CD4-positive, alpha-beta T cell (primary cell): ENCODE measurements at regions of chr5 and their contacts with region 1.

Region 1: DNA sequence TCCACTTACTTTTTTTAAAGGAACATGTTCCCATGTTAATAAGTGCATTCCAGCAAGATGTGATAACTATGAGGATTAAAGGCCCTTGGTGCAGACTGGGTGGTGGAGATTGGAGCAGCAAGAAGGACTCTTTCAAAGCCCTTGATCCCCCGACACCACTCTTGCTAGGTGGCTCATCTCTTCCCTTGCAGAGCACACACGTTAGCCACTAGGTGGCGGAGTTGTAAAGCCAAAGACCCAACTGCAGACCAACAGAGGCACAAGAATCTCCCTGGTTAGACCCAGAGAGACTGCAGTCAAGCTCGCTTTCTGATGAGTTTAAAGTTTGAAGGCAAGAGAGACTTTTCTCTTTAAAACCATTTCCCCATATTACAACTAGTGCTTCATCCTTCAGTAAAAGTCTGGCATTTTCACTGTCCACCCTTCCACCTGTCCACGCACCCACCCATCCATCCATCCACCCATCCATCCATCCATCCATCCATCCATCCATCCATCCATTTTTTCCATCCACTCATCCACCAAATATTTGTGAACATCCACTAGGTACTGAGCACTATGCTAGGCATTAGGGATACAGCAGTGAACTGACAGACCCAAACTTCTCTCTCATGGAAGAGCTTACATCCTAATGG is 226.9 kb downstream of the MSX2 start:
- DNase-seq: peak; percentile 9 to 75 (median 34)
- ATAC-seq: peak; percentile 59
- H3K4me3 ChIP-seq: no peak overlapping the region
- H3K4me3 Mint-ChIP-seq: no peak overlapping the region
- H3K27ac ChIP-seq: no peak overlapping the region
- H3K27ac Mint-ChIP-seq: no peak overlapping the region
- H3K4me1 ChIP-seq: no peaks in the 10 kb centered on the region
- H3K4me1 Mint-ChIP-seq: no peaks in the 10 kb centered on the region
- H3K27me3 ChIP-seq: peaks cover 0 to 3% of the 10 kb centered on the region in 2 experiments
- H3K27me3 Mint-ChIP-seq: peaks cover 24% of the 10 kb centered on the region
- CTCF ChIP-seq: peak; percentile 69

Region 2: GRCh38 chr5:174922955-174923354 is 28.3 kb before region 1 on chr5:
- CTCF ChIA-PET with region 1: no interaction called
- POLR2A ChIA-PET with region 1: no interaction called
- intact Hi-C with region 1: no loop called
- DNase-seq: no peak
- ATAC-seq: no peak
- H3K4me3 ChIP-seq: no peak overlapping the region
- H3K4me3 Mint-ChIP-seq: no peak overlapping the region
- H3K27ac ChIP-seq: no peak overlapping the region
- H3K27ac Mint-ChIP-seq: no peak overlapping the region
- H3K4me1 ChIP-seq: no peaks in the 10 kb centered on the region
- H3K4me1 Mint-ChIP-seq: no peaks in the 10 kb centered on the region
- H3K27me3 ChIP-seq: peaks cover 0 to 3% of the 10 kb centered on the region in 2 experiments
- H3K27me3 Mint-ChIP-seq: peaks cover 17% of the 10 kb centered on the region
- CTCF ChIP-seq: no peak

Region 3: GRCh38 chr5:175444060-175444904 is 493.0 kb after region 1 on chr5 and contains the start of gene DRD1:
- CTCF ChIA-PET with region 1: no interaction called
- POLR2A ChIA-PET with region 1: no interaction called
- intact Hi-C with region 1: loop called in 1 of 2 experiments (anchors 2 kb)
- DNase-seq: peak in 13 of 14 experiments; percentile 7 to 69 (median 41)
- ATAC-seq: peak; percentile 41
- H3K4me3 ChIP-seq: no peak within 1 kb of the TSS
- H3K4me3 Mint-ChIP-seq: peak within 1 kb of the TSS; percentile 63
- H3K27ac ChIP-seq: no peak within 1 kb of the TSS
- H3K27ac Mint-ChIP-seq: no peak within 1 kb of the TSS
- H3K4me1 ChIP-seq: peaks cover 13% of the 10 kb centered on the region
- H3K4me1 Mint-ChIP-seq: peaks cover 5% of the 10 kb centered on the region
- H3K27me3 ChIP-seq: peaks cover 40 to 55% of the 10 kb centered on the region in 2 experiments
- H3K27me3 Mint-ChIP-seq: peaks cover 75% of the 10 kb centered on the region
- CTCF ChIP-seq: peak; percentile 45
- total RNA-seq, gene DRD1: not detected

Region 4: GRCh38 chr5:175567954-175568353 is 616.7 kb after region 1 on chr5:
- CTCF ChIA-PET with region 1: no interaction called
- POLR2A ChIA-PET with region 1: no interaction called
- intact Hi-C with region 1: loop called in 1 of 2 experiments (anchors 5 kb)
- DNase-seq: peak in 2 of 14 experiments; percentile 3 to 8
- ATAC-seq: no peak
- H3K4me3 ChIP-seq: no peak overlapping the region
- H3K4me3 Mint-ChIP-seq: no peak overlapping the region
- H3K27ac ChIP-seq: no peak overlapping the region
- H3K27ac Mint-ChIP-seq: no peak overlapping the region
- H3K4me1 ChIP-seq: no peaks in the 10 kb centered on the region
- H3K4me1 Mint-ChIP-seq: no peaks in the 10 kb centered on the region
- H3K27me3 ChIP-seq: no peaks in the 10 kb centered on the region
- H3K27me3 Mint-ChIP-seq: peaks cover 3% of the 10 kb centered on the region
- CTCF ChIP-seq: no peak

Region 5: DNA sequence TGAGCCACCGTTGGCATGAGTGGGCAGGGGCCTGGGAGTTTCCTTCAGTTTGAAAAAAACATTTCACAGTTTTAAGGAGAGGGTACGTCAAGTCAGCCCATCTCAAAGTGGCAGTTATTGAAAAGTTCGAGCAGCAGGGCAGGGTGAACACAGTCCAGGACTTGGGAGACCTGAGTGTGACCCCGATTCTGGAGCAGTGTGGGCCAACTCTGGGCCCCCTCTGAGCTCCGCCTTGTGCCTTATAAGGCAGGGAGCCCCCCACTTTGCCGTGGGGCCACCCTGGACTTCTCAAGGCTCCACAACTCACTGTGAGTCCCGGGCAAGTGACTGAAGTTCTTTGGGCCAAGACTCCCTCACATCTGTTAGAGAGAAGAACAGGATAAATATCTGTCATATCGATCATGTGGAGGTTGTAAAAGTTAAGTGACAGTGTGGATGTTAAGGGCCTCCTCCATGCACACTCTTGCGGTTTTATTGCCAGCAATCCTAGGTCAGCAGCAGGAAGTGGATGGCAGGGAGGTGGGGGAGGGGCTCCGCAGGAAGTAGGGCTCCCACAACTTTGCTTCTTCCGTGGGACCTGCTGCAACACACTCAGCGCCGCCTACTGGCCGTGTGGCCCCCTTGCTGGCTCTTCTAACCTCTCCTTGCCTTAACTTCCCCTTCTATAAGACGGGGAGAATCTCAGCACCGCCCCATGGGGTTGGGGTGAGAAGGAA is 745.0 kb after region 1 on chr5:
- CTCF ChIA-PET with region 1: no interaction called
- POLR2A ChIA-PET with region 1: no interaction called
- intact Hi-C with region 1: loop called in 1 of 2 experiments (anchors 10 kb)
- DNase-seq: peak; percentile 50 to 87 (median 70)
- ATAC-seq: peak; percentile 80
- H3K4me3 ChIP-seq: no peak overlapping the region
- H3K4me3 Mint-ChIP-seq: peak overlapping the region; percentile 18
- H3K27ac ChIP-seq: peak overlapping the region in 1 of 2 donors; percentile 13
- H3K27ac Mint-ChIP-seq: peak overlapping the region; percentile 61
- H3K4me1 ChIP-seq: peaks cover 28% of the 10 kb centered on the region
- H3K4me1 Mint-ChIP-seq: peaks cover 53% of the 10 kb centered on the region
- H3K27me3 ChIP-seq: no peaks in the 10 kb centered on the region
- H3K27me3 Mint-ChIP-seq: no peaks in the 10 kb centered on the region
- CTCF ChIP-seq: peak; percentile 88

Region 6: GRCh38 chr5:175718401-175719108 is 767.3 kb after region 1 on chr5:
- CTCF ChIA-PET with region 1: no interaction called
- POLR2A ChIA-PET with region 1: no interaction called
- intact Hi-C with region 1: loop called in 1 of 2 experiments (anchors 2 kb)
- DNase-seq: peak; percentile 20 to 82 (median 52)
- ATAC-seq: no peak
- H3K4me3 ChIP-seq: no peak overlapping the region
- H3K4me3 Mint-ChIP-seq: no peak overlapping the region
- H3K27ac ChIP-seq: no peak overlapping the region
- H3K27ac Mint-ChIP-seq: no peak overlapping the region
- H3K4me1 ChIP-seq: no peaks in the 10 kb centered on the region
- H3K4me1 Mint-ChIP-seq: peaks cover 6% of the 10 kb centered on the region
- H3K27me3 ChIP-seq: no peaks in the 10 kb centered on the region
- H3K27me3 Mint-ChIP-seq: no peaks in the 10 kb centered on the region
- CTCF ChIP-seq: peak; percentile 75